ENCODE measurements at regions of chr9 and their contacts with region 1.

Region 1: GRCh38 chr9:84668196-84669012 is 1.1 kb upstream of the NTRK2 start:
- DNase-seq: peak; percentile 74
- H3K4me3 ChIP-seq: peak overlapping the region; percentile 12 to 50 (median 46)
- H3K27ac ChIP-seq: no peak overlapping the region
- H3K4me1 ChIP-seq: peaks cover 31% of the 10 kb centered on the region
- H3K27me3 ChIP-seq: peaks cover 10% of the 10 kb centered on the region
- CTCF ChIP-seq: peak; percentile 54 to 57

Region 2: GRCh38 chr9:84404095-84404686 is 264.2 kb before region 1 on chr9:
- CTCF ChIA-PET with region 1: no interaction called
- dilution Hi-C with region 1: no loop called
- in situ Hi-C with region 1: loop called in 1 of 2 experiments (anchors 25 kb)
- intact Hi-C with region 1: loop called (anchors 2 kb)
- DNase-seq: no peak
- H3K4me3 ChIP-seq: no peak overlapping the region
- H3K27ac ChIP-seq: no peak overlapping the region
- H3K4me1 ChIP-seq: no peaks in the 10 kb centered on the region
- H3K27me3 ChIP-seq: no peaks in the 10 kb centered on the region
- CTCF ChIP-seq: peak; percentile 57 to 76

Region 3: DNA sequence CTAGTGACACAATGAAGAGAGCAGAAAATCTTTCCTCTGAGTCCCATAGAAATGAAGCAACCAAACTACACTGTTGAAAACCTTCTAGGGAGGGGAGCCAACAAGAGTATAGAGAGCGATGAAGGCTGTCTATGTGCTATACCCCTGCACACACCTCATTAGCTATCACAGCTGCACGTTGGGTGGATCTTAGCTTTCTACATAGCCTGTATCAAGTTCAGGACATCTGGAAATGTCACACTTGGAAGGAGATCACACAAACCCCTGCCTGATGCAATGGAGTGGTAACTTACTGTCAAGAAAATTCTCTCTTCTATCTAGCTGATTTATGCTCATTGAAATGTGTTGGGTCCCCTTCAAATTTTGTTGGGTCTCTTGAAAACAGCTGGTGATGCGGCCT is 125.8 kb before region 1 on chr9:
- CTCF ChIA-PET with region 1: no interaction called
- dilution Hi-C with region 1: no loop called
- in situ Hi-C with region 1: no loop called
- intact Hi-C with region 1: loop called (anchors 10 kb)
- DNase-seq: no peak
- H3K4me3 ChIP-seq: no peak overlapping the region
- H3K27ac ChIP-seq: no peak overlapping the region
- H3K4me1 ChIP-seq: no peaks in the 10 kb centered on the region
- H3K27me3 ChIP-seq: no peaks in the 10 kb centered on the region
- CTCF ChIP-seq: no peak

Region 4: GRCh38 chr9:84652577-84653061 is 15.8 kb before region 1 on chr9:
- CTCF ChIA-PET with region 1: no interaction called
- dilution Hi-C with region 1: no loop called
- in situ Hi-C with region 1: no loop called
- intact Hi-C with region 1: no loop called
- DNase-seq: no peak
- H3K4me3 ChIP-seq: no peak overlapping the region
- H3K27ac ChIP-seq: no peak overlapping the region
- H3K4me1 ChIP-seq: no peaks in the 10 kb centered on the region
- H3K27me3 ChIP-seq: peaks cover 2% of the 10 kb centered on the region
- CTCF ChIP-seq: peak in 1 of 2 donors; percentile 20

Measured in mammary epithelial cell (primary cell).